Right ventricle myocardium superior (tissue), 1 donor: ENCODE measurements at regions of chr5 and their contacts with region 1.

Region 1: GRCh38 chr5:32709781-32710549 is 1.2 kb upstream of the NPR3 start:
- DNase-seq: peak; percentile 79
- ATAC-seq: peak; percentile 73

Region 2: DNA sequence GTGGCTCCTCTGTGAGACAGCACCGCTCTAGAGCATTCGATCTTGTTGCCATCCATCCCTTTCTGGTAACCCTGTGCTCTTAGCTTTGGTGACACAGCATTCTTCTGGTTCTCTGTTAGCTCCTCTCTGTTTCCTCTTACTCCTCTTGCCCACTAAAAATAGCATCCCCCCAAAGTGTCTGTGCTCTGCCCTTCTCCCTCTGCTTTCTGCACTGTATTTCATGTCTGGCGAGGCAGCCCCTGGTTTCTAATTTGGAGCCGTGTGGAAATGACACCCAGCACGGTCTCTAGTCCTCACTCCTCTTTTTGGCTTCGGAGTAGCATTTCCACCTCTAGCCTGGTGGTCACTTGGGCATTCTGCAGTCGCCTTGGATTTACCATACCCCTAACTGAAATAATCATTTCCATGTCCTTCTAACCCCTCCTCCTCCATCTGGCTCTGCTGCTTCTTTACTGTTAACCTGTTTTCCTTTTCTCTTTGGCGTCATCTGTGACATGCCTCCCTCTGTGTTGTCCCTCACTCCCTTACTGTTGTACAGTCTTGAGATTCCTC is 24.9 kb after region 1 on chr5:
- intact Hi-C with region 1: no loop called
- DNase-seq: no peak
- ATAC-seq: peak; percentile 12

Region 3: GRCh38 chr5:33180900-33181299 is 470.9 kb after region 1 on chr5:
- intact Hi-C with region 1: loop called (anchors 10 kb)
- DNase-seq: no peak
- ATAC-seq: peak; percentile 58

Region 4: DNA sequence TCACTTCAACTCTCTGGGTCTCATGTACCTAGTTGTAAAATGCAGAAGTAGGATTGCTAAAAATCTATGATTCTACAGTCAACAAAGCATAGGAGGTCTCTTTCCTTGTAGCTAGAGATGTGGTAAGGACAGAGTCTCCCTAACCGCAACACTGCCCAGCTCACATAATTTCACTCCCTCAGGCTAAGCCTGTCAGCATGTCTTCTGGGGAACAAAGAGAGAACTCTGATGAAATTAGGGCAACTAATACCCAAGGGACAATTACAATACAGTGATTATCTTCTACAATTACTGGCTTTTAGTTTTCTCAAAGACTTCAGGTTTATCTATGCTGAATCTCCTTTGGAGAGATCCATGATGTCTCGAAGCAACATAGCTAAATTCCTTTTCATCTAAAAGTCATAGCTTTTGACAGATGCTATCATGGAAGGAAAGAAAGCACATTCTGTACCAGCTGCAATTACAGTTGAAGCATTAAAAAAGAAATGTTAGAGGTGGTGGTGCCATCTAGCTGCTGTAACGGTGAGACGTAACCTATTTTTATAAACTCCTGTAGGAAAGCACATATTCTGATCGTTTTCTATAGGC is 589.8 kb after region 1 on chr5:
- intact Hi-C with region 1: loop called (anchors 10 kb)
- DNase-seq: no peak
- ATAC-seq: peak; percentile 86